Activated CD8-positive, alpha-beta T cell treated with anti-CD3 and anti-CD28 coated beads, Interleukin-2, amount 10 ng/mL, durations not matched to agents 7 days and 5 days (primary cell): ENCODE measurements at regions of chr16 and their contacts with region 1.

Region 1: GRCh38 chr16:68264128-68265077 is at the start of gene SLC7A6:
- DNase-seq: peak; percentile 85
- ATAC-seq: peak; percentile 71
- H3K4me3 Mint-ChIP-seq: peak within 1 kb of the TSS; percentile 93
- H3K27ac Mint-ChIP-seq: peak within 1 kb of the TSS; percentile 99
- H3K4me1 Mint-ChIP-seq: peaks cover 53% of the 10 kb centered on the region
- H3K27me3 Mint-ChIP-seq: no peaks in the 10 kb centered on the region
- total RNA-seq, gene SLC7A6: 84.1 to 85.0 TPM

Region 2: DNA sequence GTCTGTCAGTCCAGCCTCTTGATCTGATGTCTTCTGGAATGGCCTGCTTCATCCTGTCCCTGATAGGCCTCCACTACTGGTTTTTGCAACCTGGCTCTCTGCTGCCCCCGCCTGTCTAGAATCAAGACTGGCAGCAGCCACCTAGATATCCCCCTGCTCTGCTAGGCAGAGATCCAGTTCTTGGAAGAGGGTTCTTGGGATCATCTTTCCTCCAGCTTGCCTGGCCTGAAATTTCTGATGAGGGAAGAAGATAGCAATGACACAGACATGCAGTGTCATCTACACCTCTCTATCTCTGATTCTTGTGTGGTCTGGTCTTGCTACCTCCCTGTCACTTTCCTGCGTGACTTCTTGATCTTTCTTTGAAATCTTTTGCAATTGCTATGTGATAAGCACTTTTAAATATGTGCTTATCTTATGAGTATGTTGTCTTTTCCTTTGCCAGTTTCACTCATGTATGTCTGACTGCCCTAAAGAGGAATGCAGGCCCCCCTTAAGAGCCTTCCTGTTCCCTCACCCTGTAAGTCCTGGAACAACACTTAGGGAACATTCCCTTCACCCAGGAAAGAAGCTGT is 199.5 kb before region 1 on chr16:
- CTCF ChIA-PET with region 1: no interaction called
- POLR2A ChIA-PET with region 1: no interaction called
- DNase-seq: peak; percentile 87
- ATAC-seq: peak; percentile 74
- H3K4me3 Mint-ChIP-seq: no peak overlapping the region
- H3K27ac Mint-ChIP-seq: peak overlapping the region; percentile 88
- H3K4me1 Mint-ChIP-seq: peaks cover 85% of the 10 kb centered on the region
- H3K27me3 Mint-ChIP-seq: no peaks in the 10 kb centered on the region

Region 3: DNA sequence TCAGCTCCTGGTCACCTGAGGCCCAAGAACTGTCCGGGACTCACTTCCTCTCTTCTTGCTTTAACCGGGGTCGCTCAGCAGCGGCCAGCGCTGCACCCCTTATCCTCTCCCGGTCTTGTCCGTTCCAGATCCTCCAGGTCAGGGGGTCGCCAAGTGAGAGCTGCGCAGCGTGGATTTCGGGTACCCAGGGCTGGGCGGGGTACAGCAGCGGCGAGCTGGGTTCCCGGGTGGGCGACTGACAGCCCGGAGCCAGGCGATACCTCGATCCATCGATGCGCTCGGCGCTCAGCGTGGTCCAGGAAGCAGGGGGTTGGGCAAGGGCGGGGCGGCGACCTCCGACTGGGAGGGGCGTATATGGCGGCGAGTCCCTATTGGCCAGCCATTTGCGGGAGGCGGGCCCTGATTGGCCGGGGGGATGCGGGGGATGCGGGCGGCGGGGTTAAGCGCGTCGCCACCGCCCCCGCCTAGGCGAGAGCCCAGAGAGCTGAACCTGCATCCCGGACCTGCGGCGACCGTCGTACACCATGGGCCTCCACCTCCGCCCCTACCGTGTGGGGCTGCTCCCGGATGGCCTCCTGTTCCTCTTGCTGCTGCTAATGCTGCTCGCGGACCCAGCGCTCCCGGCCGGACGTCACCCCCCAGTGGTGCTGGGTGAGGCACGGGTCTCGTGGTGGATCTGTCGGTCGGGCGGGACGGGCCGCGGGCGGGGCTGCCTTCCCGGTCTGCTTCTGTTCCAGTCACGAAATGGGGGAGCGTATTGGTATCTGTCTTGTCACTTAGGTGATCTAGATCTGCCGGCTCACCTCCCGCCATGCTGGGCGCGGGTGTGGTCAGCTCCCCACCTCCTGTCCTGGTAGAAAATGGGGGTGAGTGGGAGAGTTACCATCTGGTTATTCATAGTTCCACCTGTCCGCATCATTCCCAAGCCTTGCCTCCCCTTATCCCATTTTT is 19.2 kb before region 1 on chr16 and contains the start of gene PLA2G15:
- CTCF ChIA-PET with region 1: interaction called, 67 read pairs
- POLR2A ChIA-PET with region 1: interaction called, 6 read pairs
- DNase-seq: peak; percentile 97
- ATAC-seq: peak; percentile 97
- H3K4me3 Mint-ChIP-seq: peak within 1 kb of the TSS; percentile 95
- H3K27ac Mint-ChIP-seq: peak within 1 kb of the TSS; percentile 78
- H3K4me1 Mint-ChIP-seq: peaks cover 27% of the 10 kb centered on the region
- H3K27me3 Mint-ChIP-seq: no peaks in the 10 kb centered on the region
- total RNA-seq, gene PLA2G15: 8.6 to 9.4 TPM

Region 4: DNA sequence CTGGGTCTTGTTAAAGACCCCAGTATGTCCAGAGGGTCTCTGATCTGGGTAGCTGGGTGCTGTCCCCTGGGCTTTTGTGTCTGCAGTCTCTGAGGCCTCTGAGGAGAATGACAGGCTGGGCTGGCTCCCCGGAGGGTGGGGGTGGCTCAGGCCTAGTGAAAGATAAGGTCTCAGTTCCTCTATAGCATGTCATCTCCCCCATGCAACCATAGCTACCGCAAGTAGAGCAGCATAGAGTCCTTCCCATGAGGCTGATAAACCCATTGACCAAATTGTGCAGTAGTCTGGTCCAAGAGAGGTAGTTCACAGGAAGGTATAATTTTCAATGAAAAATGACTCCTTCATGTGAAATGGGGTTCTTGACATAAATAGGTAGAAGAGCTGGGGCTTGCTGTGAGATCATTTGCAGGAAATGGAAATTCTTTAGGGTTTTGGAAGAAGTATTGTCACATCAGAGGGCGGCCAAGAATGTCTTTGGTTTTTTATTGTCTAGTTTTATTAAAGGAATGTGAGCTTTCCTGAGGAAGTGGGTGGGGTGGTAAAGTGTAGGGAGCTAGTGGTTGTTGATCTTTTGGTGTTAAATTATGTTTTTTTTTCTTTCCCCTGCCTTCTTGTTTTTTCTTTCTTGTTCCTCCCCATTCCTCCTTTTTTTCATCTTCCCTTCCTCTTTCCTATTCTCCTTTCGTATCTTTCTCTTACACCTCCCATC is 25.4 kb after region 1 on chr16:
- CTCF ChIA-PET with region 1: interaction called, 346 read pairs
- POLR2A ChIA-PET with region 1: interaction called, 55 read pairs
- DNase-seq: peak; percentile 74
- ATAC-seq: peak; percentile 74
- H3K4me3 Mint-ChIP-seq: peak overlapping the region; percentile 30
- H3K27ac Mint-ChIP-seq: peak overlapping the region; percentile 84
- H3K4me1 Mint-ChIP-seq: peaks cover 83% of the 10 kb centered on the region
- H3K27me3 Mint-ChIP-seq: no peaks in the 10 kb centered on the region

Region 5: DNA sequence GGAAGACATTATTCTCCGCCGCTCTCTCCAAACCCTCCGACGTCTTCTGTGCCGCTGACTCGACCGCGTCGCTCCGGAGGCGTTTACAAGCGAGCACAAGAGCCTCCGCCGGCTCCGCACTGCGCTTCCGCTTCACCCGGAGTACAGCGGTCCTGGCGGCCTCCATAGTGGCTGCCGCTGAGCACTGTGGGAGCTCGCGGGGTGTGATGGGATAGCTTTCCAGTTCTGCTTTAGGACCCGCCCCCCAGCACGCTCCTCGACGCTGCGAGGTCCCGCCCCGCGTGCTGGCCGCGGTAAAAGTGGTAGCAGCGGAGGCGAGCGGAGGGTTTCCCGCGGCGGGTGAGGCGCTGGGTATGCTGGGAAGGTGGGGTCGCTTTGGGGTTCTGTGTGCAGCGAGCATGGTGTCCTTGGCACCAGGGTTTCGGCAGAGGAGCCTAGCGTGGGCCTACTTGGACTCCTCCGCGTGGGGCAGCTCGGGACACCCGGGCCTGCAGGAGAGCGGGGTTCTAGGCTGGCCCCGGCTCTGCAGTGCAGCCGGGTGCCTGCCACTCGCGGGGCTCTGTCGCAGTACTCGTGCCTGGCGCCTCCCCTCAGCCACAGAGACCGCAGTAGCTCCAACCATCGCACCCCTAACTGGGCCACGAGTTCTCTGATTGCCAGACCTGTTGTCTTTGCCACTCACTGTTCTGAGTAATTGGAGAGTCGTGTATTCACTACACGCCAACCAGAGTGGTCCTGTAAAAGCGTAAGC is 46.5 kb after region 1 on chr16 and contains the starts of genes PRMT7 and SLC7A6OS:
- CTCF ChIA-PET with region 1: interaction called, 118 read pairs
- POLR2A ChIA-PET with region 1: interaction called, 41 read pairs
- DNase-seq: peak; percentile 96
- ATAC-seq: peak; percentile 99
- H3K4me3 Mint-ChIP-seq: peak within 1 kb of the TSS; percentile 89
- H3K27ac Mint-ChIP-seq: peak within 1 kb of the TSS; percentile 88
- H3K4me1 Mint-ChIP-seq: peaks cover 44% of the 10 kb centered on the region
- H3K27me3 Mint-ChIP-seq: no peaks in the 10 kb centered on the region
- total RNA-seq, gene PRMT7: 70.4 to 73.2 TPM
- total RNA-seq, gene SLC7A6OS: 26.3 to 30.7 TPM

Region 6: DNA sequence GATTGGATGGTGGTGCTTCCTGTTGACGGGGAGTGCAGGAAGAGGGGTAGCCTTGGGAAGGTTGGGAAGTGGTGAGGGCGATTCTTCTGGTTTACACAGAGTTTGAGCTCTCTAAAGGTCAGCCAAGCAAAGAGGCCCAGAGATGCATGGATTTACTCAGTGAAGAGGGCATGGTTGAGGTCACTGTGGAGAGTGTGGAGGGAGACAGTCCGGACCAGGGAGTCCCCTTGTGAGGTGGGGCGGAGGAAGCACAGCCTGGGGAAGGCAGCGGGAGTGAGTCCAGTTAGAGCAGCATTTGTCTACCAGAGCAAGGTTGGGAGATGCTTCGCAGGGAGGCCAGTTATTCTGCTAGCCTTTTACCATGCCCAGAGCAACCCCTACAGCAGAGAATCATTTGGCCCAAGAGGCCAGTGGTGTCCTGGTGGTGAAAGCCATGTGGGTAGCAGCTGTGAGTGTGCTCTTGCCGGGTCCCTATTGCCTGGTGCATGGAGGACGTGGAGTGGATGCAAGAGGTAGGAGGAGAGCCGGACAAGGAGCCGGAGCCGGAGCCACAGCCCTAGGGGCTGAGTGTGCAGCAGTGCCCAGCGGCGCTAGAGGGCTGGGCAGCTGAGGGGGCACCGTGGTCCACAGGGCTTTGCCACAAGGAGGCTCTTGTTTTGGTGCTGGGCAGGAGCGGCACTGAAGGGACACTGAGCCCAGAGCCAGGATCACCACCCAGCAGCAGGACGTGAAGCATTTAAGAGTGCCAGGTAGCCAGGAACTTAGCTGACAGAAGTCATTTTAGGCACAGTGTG is 74.1 kb after region 1 on chr16:
- CTCF ChIA-PET with region 1: interaction called, 544 read pairs
- POLR2A ChIA-PET with region 1: no interaction called
- DNase-seq: no peak
- ATAC-seq: no peak
- H3K4me3 Mint-ChIP-seq: no peak overlapping the region
- H3K27ac Mint-ChIP-seq: peak overlapping the region; percentile 31
- H3K4me1 Mint-ChIP-seq: peaks cover 4% of the 10 kb centered on the region
- H3K27me3 Mint-ChIP-seq: no peaks in the 10 kb centered on the region